Activated B cell treated with CpG ODN at 0.5 μM for 24 hours (primary cell): ENCODE measurements at regions of chr20 and their contacts with region 1.

Region 1: GRCh38 chr20:34704177-34705007 is at the start of gene TP53INP2:
- DNase-seq: peak; percentile 84
- ATAC-seq: peak; percentile 61
- H3K4me3 Mint-ChIP-seq: peak within 1 kb of the TSS; percentile 92
- H3K27ac Mint-ChIP-seq: peak within 1 kb of the TSS; percentile 86
- H3K4me1 Mint-ChIP-seq: peaks cover 21% of the 10 kb centered on the region
- H3K27me3 Mint-ChIP-seq: peaks cover 7% of the 10 kb centered on the region
- CTCF ChIP-seq: no peak
- total RNA-seq, gene TP53INP2: 4.0 and 4.2 TPM in 2 replicates

Region 2: GRCh38 chr20:34312544-34313217 is 391.7 kb before region 1 on chr20:
- CTCF ChIA-PET with region 1: interaction called, 10 read pairs
- POLR2A ChIA-PET with region 1: interaction called, 3 read pairs
- intact Hi-C with region 1: loop called (anchors 2 kb)
- DNase-seq: peak; percentile 74
- ATAC-seq: peak; percentile 100
- H3K4me3 Mint-ChIP-seq: no peak overlapping the region
- H3K27ac Mint-ChIP-seq: no peak overlapping the region
- H3K4me1 Mint-ChIP-seq: peaks cover 7% of the 10 kb centered on the region
- H3K27me3 Mint-ChIP-seq: peaks cover 19% of the 10 kb centered on the region
- CTCF ChIP-seq: peak; percentile 90

Region 3: DNA sequence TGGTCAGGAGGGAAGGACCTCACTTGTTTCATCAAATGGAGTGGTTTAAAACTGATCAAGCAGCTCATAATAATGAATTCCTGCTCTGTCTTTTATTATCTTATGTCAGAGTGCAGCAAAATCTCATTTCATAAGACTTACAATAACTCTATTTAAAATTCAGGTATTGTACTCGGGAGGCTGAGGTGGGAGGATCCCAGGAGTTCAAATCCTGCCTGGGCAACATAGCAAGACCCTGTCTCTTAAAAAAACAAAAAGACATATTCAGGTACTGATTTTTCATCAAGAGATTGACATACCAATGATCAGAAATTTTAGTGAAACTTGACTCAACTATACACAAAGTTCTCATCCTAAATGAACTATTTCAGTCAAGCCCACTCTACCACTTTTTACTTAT is 193.8 kb before region 1 on chr20:
- CTCF ChIA-PET with region 1: interaction called, 3 read pairs
- POLR2A ChIA-PET with region 1: interaction called, 10 read pairs
- intact Hi-C with region 1: loop called (anchors 1 kb)
- DNase-seq: no peak
- ATAC-seq: no peak
- H3K4me3 Mint-ChIP-seq: no peak overlapping the region
- H3K27ac Mint-ChIP-seq: no peak overlapping the region
- H3K4me1 Mint-ChIP-seq: peaks cover 18% of the 10 kb centered on the region
- H3K27me3 Mint-ChIP-seq: no peaks in the 10 kb centered on the region
- CTCF ChIP-seq: no peak

Region 4: GRCh38 chr20:34538671-34539123 is 165.7 kb before region 1 on chr20:
- CTCF ChIA-PET with region 1: interaction called, 21 read pairs
- POLR2A ChIA-PET with region 1: no interaction called
- intact Hi-C with region 1: loop called (anchors 1 kb)
- DNase-seq: peak; percentile 37
- ATAC-seq: peak; percentile 61
- H3K4me3 Mint-ChIP-seq: no peak overlapping the region
- H3K27ac Mint-ChIP-seq: no peak overlapping the region
- H3K4me1 Mint-ChIP-seq: peaks cover 15% of the 10 kb centered on the region
- H3K27me3 Mint-ChIP-seq: no peaks in the 10 kb centered on the region
- CTCF ChIP-seq: no peak

Region 5: GRCh38 chr20:34676642-34677373 is 27.6 kb before region 1 on chr20 and contains the start of gene PIGU:
- CTCF ChIA-PET with region 1: interaction called, 5 read pairs
- POLR2A ChIA-PET with region 1: interaction called, 21 read pairs
- intact Hi-C with region 1: loop called (anchors 1 kb)
- DNase-seq: peak; percentile 91
- ATAC-seq: peak; percentile 94
- H3K4me3 Mint-ChIP-seq: peak within 1 kb of the TSS; percentile 98
- H3K27ac Mint-ChIP-seq: peak within 1 kb of the TSS; percentile 95
- H3K4me1 Mint-ChIP-seq: peaks cover 15% of the 10 kb centered on the region
- H3K27me3 Mint-ChIP-seq: no peaks in the 10 kb centered on the region
- CTCF ChIP-seq: no peak
- total RNA-seq, gene PIGU: 14.7 and 15.3 TPM in 2 replicates

Region 6: GRCh38 chr20:35277531-35278395 is 573.4 kb after region 1 on chr20 and contains the start of gene MMP24OS:
- CTCF ChIA-PET with region 1: no interaction called
- POLR2A ChIA-PET with region 1: interaction called, 12 read pairs
- intact Hi-C with region 1: no loop called
- DNase-seq: peak; percentile 85
- ATAC-seq: peak; percentile 90
- H3K4me3 Mint-ChIP-seq: peak within 1 kb of the TSS; percentile 97
- H3K27ac Mint-ChIP-seq: peak within 1 kb of the TSS; percentile 99
- H3K4me1 Mint-ChIP-seq: peaks cover 31% of the 10 kb centered on the region
- H3K27me3 Mint-ChIP-seq: no peaks in the 10 kb centered on the region
- CTCF ChIP-seq: no peak
- total RNA-seq, gene MMP24OS: 39.2 and 47.9 TPM in 2 replicates

Region 7: GRCh38 chr20:35901678-35902544 is 1197.5 kb after region 1 on chr20:
- CTCF ChIA-PET with region 1: no interaction called
- POLR2A ChIA-PET with region 1: no interaction called
- intact Hi-C with region 1: no loop called
- DNase-seq: no peak
- ATAC-seq: no peak
- H3K4me3 Mint-ChIP-seq: no peak overlapping the region
- H3K27ac Mint-ChIP-seq: no peak overlapping the region
- H3K4me1 Mint-ChIP-seq: no peaks in the 10 kb centered on the region
- H3K27me3 Mint-ChIP-seq: no peaks in the 10 kb centered on the region
- CTCF ChIP-seq: no peak